ENCODE measurements at regions of chr10 and their contacts with region 1.

Region 1: DNA sequence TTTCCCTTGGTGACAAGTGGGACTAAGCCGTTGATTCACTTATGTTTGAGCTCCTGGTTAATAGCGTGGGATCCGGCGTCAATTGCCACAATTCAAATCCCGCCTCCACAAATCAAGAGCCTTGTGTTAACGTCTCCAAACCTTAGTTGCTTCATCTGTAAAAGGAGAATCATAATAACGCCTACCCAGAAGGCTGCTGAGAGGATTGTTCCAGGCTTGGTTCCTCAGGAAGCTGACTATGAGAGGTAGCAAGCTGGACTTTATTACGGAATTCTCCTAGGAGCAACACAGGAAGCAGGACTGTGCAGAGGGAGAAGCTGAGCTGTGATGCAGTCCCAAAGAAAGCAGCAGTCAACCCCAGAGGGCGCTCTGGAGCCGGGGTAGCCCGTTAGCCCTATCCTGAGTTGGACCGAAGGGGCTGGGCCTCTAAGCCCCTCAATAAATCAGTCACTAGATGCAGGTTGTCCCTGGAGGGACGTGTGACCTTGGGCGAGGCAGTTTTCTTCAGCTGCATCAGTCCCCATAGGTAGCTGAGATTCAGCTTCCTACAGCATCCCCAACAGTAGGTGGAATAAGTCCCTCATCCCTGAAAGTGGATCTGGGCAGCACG is 6.9 kb upstream of the BAG3 start:
- DNase-seq: no peak
- H3K4me3 ChIP-seq: no peak overlapping the region
- H3K27me3 ChIP-seq: no peaks in the 10 kb centered on the region
- CTCF ChIP-seq: 0 out of 2 replicates have a peak, but pooled peaks have one; percentile 22

Region 2: DNA sequence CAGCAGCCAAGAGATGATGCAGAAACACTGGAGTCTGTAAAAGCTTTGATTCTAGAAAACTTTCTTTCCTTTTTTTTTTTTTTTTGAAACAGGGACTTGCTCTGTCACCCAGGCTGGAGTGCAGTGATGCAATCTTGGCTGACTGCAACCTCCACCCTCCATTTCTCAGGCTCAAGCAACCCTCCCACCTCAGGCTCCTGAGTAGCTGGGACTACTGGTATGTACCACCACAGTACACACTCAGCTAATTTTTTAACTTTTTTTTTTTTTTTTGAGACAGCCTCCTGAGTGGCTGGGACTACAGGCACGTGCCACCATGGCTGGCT is 10.1 kb before region 1 on chr10:
- CTCF ChIA-PET with region 1: interaction called, 12 read pairs
- POLR2A ChIA-PET with region 1: no interaction called
- DNase-seq: no peak
- H3K4me3 ChIP-seq: no peak overlapping the region
- H3K27me3 ChIP-seq: no peaks in the 10 kb centered on the region
- CTCF ChIP-seq: no peak

Region 3: GRCh38 chr10:119725828-119726675 is 81.7 kb after region 1 on chr10 and contains the start of gene INPP5F:
- CTCF ChIA-PET with region 1: no interaction called
- POLR2A ChIA-PET with region 1: interaction called, 10 read pairs
- DNase-seq: peak; percentile 82
- H3K4me3 ChIP-seq: peak within 1 kb of the TSS; percentile 69
- H3K27me3 ChIP-seq: no peaks in the 10 kb centered on the region
- CTCF ChIP-seq: 0 out of 2 replicates have a peak, but pooled peaks have one; percentile 11
- polyA plus RNA-seq, gene INPP5F: 4.1 and 7.3 TPM in 2 replicates

Region 4: DNA sequence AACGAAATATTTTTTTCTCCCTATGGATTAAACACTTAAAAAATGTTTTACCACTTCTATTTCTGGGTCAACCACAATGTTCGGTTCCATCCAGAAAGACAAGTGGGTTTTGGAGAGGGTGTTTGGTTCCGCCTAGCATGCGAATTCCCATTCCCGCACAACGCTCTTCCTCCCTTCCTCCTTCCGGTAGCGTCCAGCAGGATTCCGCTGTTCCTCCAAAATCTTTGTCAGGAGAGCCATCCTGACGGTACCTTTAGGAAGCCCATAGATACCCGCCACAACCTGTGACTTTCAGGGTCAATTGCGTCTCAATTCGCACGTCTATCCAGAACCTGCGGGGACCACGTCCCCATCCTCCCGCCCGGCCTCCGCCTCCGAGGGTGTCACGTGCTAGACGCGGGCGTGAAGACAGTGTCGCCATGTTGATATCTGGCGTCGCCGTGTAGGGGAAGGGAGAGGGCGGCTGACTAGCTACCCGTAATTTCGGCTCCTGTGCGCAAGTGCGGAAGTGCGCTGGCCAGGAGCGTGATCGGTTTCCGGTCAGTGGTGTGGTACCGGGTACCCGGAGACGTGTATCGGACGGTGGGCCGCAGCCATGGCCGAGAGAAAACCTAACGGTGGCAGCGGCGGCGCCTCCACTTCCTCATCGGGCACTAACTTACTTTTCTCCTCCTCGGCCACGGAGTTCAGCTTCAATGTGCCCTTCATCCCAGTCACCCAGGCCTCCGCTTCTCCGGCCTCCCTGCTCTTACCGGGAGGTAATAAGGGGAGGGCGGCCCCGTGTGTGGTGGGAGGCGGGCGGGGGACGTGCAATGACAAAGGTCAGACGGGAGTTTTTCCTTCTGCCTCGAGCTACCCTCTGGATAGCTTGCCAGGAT is 248.1 kb after region 1 on chr10 and contains the start of gene SEC23IP:
- CTCF ChIA-PET with region 1: no interaction called
- POLR2A ChIA-PET with region 1: no interaction called
- DNase-seq: peak; percentile 72
- H3K4me3 ChIP-seq: peak within 1 kb of the TSS; percentile 86
- H3K27me3 ChIP-seq: no peaks in the 10 kb centered on the region
- CTCF ChIP-seq: no peak
- polyA plus RNA-seq, gene SEC23IP: 42.2 and 44.3 TPM in 2 replicates